ENCODE measurements at regions of chr11 and their contacts with region 1.

Region 1: DNA sequence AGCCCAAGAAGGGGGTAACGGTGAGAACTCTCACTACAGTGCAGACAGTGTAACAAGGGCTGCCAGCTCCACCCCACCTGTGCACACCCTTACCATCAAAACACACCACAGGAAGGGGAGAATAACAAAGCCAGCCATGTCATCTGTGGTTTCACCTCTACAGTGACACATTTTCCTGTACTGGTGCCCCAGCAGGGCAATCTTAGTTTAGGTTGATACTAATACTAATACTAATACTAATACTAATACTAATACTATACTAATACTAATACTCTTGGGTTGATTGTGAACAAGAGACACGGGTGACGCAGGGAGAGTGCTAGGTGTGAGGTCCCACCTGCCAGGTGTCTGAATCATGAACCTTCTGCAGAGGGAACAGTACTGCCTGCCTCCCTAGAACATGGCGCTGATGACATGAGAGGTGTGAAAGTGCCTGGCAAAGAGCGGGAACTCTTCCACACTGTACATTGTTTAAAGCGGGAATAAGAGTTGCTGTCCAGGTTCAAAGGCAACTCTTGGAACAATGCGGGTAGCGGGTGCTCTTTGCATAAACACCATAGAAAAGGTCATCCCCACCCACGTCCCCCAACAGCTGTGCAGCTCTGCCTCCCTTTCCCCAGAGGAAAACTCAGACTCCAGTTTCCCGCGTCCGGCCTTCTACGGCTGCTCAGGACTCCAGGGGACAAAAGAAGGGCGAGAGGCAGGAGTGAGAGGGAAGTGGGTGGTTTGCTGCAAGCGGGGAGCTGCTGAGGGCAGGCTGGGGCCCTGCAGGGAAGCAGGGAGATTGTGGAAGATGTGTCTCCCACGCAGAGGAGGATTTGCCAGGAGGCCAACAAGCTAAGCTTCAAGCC is 25.0 kb upstream of the TMPRSS4 start:
- DNase-seq: peak; percentile 86
- H3K4me3 Mint-ChIP-seq: peak overlapping the region; percentile 54
- H3K27ac Mint-ChIP-seq: peak overlapping the region; percentile 98
- H3K4me1 Mint-ChIP-seq: peaks cover 64% of the 10 kb centered on the region
- H3K27me3 Mint-ChIP-seq: no peaks in the 10 kb centered on the region

Region 2: GRCh38 chr11:117583063-117583801 is 468.6 kb before region 1 on chr11:
- CTCF ChIA-PET with region 1: no interaction called
- POLR2A ChIA-PET with region 1: no interaction called
- DNase-seq: no peak
- H3K4me3 Mint-ChIP-seq: no peak overlapping the region
- H3K27ac Mint-ChIP-seq: no peak overlapping the region
- H3K4me1 Mint-ChIP-seq: no peaks in the 10 kb centered on the region
- H3K27me3 Mint-ChIP-seq: peaks cover 7% of the 10 kb centered on the region

Region 3: GRCh38 chr11:117678658-117679406 is 373.0 kb before region 1 on chr11:
- CTCF ChIA-PET with region 1: no interaction called
- POLR2A ChIA-PET with region 1: no interaction called
- DNase-seq: no peak
- H3K4me3 Mint-ChIP-seq: no peak overlapping the region
- H3K27ac Mint-ChIP-seq: no peak overlapping the region
- H3K4me1 Mint-ChIP-seq: no peaks in the 10 kb centered on the region
- H3K27me3 Mint-ChIP-seq: peaks cover 7% of the 10 kb centered on the region

Region 4: DNA sequence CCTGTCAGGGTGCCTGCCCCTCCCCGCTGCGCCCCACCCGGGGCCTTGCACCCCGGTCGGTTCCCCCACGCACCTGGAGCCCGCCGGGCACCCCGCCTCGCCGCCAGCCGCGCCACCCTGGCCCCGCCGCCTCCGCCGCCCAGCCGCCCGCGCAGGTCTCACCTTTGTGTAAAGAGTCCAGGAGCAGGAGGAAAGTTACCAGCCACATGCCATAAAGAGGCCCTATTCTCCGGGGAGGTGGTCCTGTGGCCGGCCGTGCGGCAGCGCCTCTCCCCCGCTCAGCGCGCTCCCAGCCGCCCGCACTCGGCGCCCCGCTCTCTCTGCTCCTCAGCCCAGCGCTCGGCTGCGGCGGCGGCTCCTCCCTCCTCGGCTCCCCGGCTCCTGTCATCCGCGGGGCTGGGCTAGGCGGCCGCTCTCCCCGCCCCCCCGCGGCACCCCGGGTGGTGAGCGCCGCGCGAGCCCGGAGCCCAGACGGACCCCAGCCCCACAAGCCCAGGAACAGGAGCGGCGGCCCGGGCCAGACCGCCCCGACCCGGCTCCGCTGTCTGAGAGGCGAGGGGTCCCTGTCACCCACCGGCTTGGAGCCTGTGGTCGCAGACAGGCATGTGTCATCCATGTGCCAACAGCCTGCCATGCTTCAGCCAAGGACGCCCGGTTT is 254.8 kb before region 1 on chr11 and contains the start of gene DSCAML1:
- CTCF ChIA-PET with region 1: interaction called, 11 read pairs
- POLR2A ChIA-PET with region 1: no interaction called
- DNase-seq: peak; percentile 27
- H3K4me3 Mint-ChIP-seq: peak within 1 kb of the TSS; percentile 29
- H3K27ac Mint-ChIP-seq: no peak within 1 kb of the TSS
- H3K4me1 Mint-ChIP-seq: peaks cover 4% of the 10 kb centered on the region
- H3K27me3 Mint-ChIP-seq: peaks cover 71% of the 10 kb centered on the region
- total RNA-seq, gene DSCAML1: 0.02 to 0.25 TPM

Region 5: GRCh38 chr11:117817368-117818040 is 234.3 kb before region 1 on chr11:
- CTCF ChIA-PET with region 1: interaction called, 37 read pairs
- POLR2A ChIA-PET with region 1: no interaction called
- DNase-seq: peak; percentile 85
- H3K4me3 Mint-ChIP-seq: no peak overlapping the region
- H3K27ac Mint-ChIP-seq: peak overlapping the region; percentile 92
- H3K4me1 Mint-ChIP-seq: peaks cover 64% of the 10 kb centered on the region
- H3K27me3 Mint-ChIP-seq: no peaks in the 10 kb centered on the region

Region 6: GRCh38 chr11:117843666-117844484 is 208.0 kb before region 1 on chr11:
- CTCF ChIA-PET with region 1: interaction called, 25 read pairs
- POLR2A ChIA-PET with region 1: no interaction called
- DNase-seq: peak; percentile 84
- H3K4me3 Mint-ChIP-seq: no peak overlapping the region
- H3K27ac Mint-ChIP-seq: no peak overlapping the region
- H3K4me1 Mint-ChIP-seq: no peaks in the 10 kb centered on the region
- H3K27me3 Mint-ChIP-seq: peaks cover 6% of the 10 kb centered on the region

Region 7: GRCh38 chr11:117959438-117960149 is 92.2 kb before region 1 on chr11:
- CTCF ChIA-PET with region 1: interaction called, 11 read pairs
- POLR2A ChIA-PET with region 1: no interaction called
- DNase-seq: no peak
- H3K4me3 Mint-ChIP-seq: no peak overlapping the region
- H3K27ac Mint-ChIP-seq: peak overlapping the region; percentile 80
- H3K4me1 Mint-ChIP-seq: peaks cover 43% of the 10 kb centered on the region
- H3K27me3 Mint-ChIP-seq: no peaks in the 10 kb centered on the region

Measured in activated CD4-positive, alpha-beta T cell treated with anti-CD3 and anti-CD28 coated beads, Interleukin-2, amount 10 ng/mL, durations not matched to agents 7 days and 5 days (primary cell).